CD14-positive monocyte (primary cell): ENCODE measurements at regions of chr6 and their contacts with region 1.

Region 1: DNA sequence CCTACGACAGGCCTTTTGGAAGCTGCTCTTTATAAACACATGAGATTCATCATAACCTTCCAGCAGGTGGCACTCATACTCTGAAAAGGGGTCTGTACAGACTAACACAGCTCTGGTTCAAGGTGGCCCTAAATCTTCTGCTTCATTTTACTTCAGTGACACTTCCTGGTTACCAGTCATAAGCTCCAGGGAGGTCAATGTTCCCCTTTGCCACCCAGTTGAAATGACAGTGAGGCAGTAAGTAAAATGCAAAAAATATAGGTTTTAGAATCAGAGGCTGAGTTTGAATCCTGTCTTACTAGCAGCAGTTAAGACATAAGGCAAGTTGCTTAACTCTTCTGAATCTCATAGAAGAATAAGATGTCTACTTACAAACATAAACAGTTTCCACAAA is 132.8 kb downstream of the CDK19 start:
- DNase-seq: peak; percentile 77 to 86 (median 86)
- H3K4me3 ChIP-seq: no peak overlapping the region
- H3K4me3 Mint-ChIP-seq: no peak overlapping the region
- H3K27ac ChIP-seq: peak overlapping the region in 1 of 2 donors; percentile 44
- H3K27ac Mint-ChIP-seq: peak overlapping the region in 4 of 7 donors; percentile 19 to 65 (median 36)
- H3K4me1 ChIP-seq: peaks cover 5 to 13% of the 10 kb centered on the region in 2 donors
- H3K4me1 Mint-ChIP-seq: peaks cover 18% of the 10 kb centered on the region
- H3K27me3 ChIP-seq: no peaks in the 10 kb centered on the region
- H3K27me3 Mint-ChIP-seq: no peaks in the 10 kb centered on the region
- CTCF ChIP-seq: peak; percentile 76

Region 2: DNA sequence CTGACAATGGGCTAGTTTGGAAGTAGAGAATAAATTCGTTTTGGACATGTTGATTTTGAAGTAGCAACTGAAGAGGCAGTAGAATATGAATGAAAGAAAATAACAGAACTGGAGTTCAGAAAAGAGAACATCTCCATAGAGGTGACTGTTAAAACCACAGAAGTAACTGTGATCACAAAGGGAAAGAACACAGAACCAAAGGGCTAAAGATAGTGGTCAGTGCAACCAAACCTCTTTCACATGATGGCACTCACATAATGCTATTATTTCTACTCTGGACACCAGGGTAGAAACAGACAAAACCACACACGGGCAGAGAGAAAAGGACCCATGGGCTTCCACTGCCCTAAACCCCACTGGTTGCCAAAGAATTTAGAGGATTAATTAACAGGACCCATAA is 74.4 kb after region 1 on chr6:
- intact Hi-C with region 1: no loop called
- DNase-seq: no peak
- H3K4me3 ChIP-seq: no peak overlapping the region
- H3K4me3 Mint-ChIP-seq: no peak overlapping the region
- H3K27ac ChIP-seq: peak overlapping the region in 1 of 2 donors; percentile 15
- H3K27ac Mint-ChIP-seq: peak overlapping the region in 3 of 7 donors; percentile 25 to 45 (median 41)
- H3K4me1 ChIP-seq: peaks cover 12 to 20% of the 10 kb centered on the region in 2 donors
- H3K4me1 Mint-ChIP-seq: peaks cover 38% of the 10 kb centered on the region
- H3K27me3 ChIP-seq: no peaks in the 10 kb centered on the region
- H3K27me3 Mint-ChIP-seq: peaks cover 0 to 2% (median 0%) of the 10 kb centered on the region in 3 donors
- CTCF ChIP-seq: no peak

Region 3: GRCh38 chr6:110873981-110874879 is 191.8 kb after region 1 on chr6 and contains the start of gene AMD1:
- intact Hi-C with region 1: loop called in 1 of 2 experiments (anchors 10 kb)
- DNase-seq: peak; percentile 97 to 99 (median 98)
- H3K4me3 ChIP-seq: peak within 1 kb of the TSS; percentile 92 to 98 (median 94)
- H3K4me3 Mint-ChIP-seq: peak within 1 kb of the TSS; percentile 96 to 100
- H3K27ac ChIP-seq: peak within 1 kb of the TSS; percentile 93 to 96
- H3K27ac Mint-ChIP-seq: peak within 1 kb of the TSS; percentile 96 to 99 (median 98)
- H3K4me1 ChIP-seq: peaks cover 28 to 35% of the 10 kb centered on the region in 2 donors
- H3K4me1 Mint-ChIP-seq: peaks cover 24% of the 10 kb centered on the region
- H3K27me3 ChIP-seq: no peaks in the 10 kb centered on the region
- H3K27me3 Mint-ChIP-seq: no peaks in the 10 kb centered on the region
- CTCF ChIP-seq: no peak
- polyA plus RNA-seq, gene AMD1: 35.0 to 60.5 (median 45.3) TPM

Region 4: GRCh38 chr6:110882271-110882613 is 199.8 kb after region 1 on chr6:
- intact Hi-C with region 1: loop called (anchors 10 kb)
- DNase-seq: no peak
- H3K4me3 ChIP-seq: no peak overlapping the region
- H3K4me3 Mint-ChIP-seq: peak overlapping the region in 1 of 2 donors; percentile 34
- H3K27ac ChIP-seq: peak overlapping the region in 1 of 2 donors; percentile 93
- H3K27ac Mint-ChIP-seq: peak overlapping the region in 4 of 7 donors; percentile 12 to 81 (median 50)
- H3K4me1 ChIP-seq: peaks cover 70 to 90% of the 10 kb centered on the region in 2 donors
- H3K4me1 Mint-ChIP-seq: peaks cover 88% of the 10 kb centered on the region
- H3K27me3 ChIP-seq: no peaks in the 10 kb centered on the region
- H3K27me3 Mint-ChIP-seq: no peaks in the 10 kb centered on the region
- CTCF ChIP-seq: no peak

Region 5: DNA sequence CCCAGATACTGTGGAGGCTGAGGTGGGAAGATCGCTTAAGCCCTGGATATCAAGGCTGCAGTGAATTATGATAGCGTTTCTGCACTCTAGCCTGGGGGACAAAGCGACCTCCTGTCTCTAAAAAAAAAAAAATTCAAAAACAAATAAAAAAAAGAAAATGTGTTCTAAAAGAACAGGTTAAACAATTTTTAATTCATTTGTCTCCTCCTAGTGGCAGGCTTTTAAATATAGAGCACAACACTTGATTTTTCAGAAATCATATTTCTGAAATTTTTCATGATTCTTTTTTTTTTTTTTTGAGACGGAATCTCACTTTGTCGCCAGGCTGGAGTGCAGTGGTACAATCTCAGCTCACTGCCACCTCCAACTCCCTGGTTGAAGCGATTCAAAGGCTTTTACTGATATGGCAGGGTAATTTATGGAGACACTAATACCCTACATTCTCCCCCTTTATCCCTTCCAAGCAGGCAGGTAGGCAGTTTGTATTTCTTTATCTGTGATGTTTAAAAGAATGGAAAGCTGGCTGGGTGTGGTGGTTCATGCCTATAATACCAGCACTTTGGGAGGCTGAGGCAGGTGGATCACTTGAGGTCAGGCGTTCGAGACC is 267.3 kb after region 1 on chr6:
- intact Hi-C with region 1: loop called in 1 of 2 experiments (anchors 5 kb)
- DNase-seq: peak in 2 of 3 donors; percentile 20 to 54
- H3K4me3 ChIP-seq: no peak overlapping the region
- H3K4me3 Mint-ChIP-seq: no peak overlapping the region
- H3K27ac ChIP-seq: no peak overlapping the region
- H3K27ac Mint-ChIP-seq: peak overlapping the region in 4 of 7 donors; percentile 10 to 46 (median 32)
- H3K4me1 ChIP-seq: peaks cover 8 to 11% of the 10 kb centered on the region in 2 donors
- H3K4me1 Mint-ChIP-seq: peaks cover 7% of the 10 kb centered on the region
- H3K27me3 ChIP-seq: no peaks in the 10 kb centered on the region
- H3K27me3 Mint-ChIP-seq: peaks cover 0 to 2% (median 1%) of the 10 kb centered on the region in 3 donors
- CTCF ChIP-seq: peak; percentile 79

Region 6: GRCh38 chr6:110958329-110959192 is 276.1 kb after region 1 on chr6 and contains the start of gene GTF3C6:
- intact Hi-C with region 1: loop called (anchors 5 kb)
- DNase-seq: peak; percentile 92 to 94 (median 94)
- H3K4me3 ChIP-seq: peak within 1 kb of the TSS; percentile 87 to 99 (median 91)
- H3K4me3 Mint-ChIP-seq: peak within 1 kb of the TSS; percentile 92 to 97
- H3K27ac ChIP-seq: peak within 1 kb of the TSS; percentile 97
- H3K27ac Mint-ChIP-seq: peak within 1 kb of the TSS; percentile 92 to 97 (median 95)
- H3K4me1 ChIP-seq: peaks cover 10% of the 10 kb centered on the region in 2 donors
- H3K4me1 Mint-ChIP-seq: peaks cover 16% of the 10 kb centered on the region
- H3K27me3 ChIP-seq: no peaks in the 10 kb centered on the region
- H3K27me3 Mint-ChIP-seq: peaks cover 0 to 2% (median 0%) of the 10 kb centered on the region in 3 donors
- CTCF ChIP-seq: no peak
- polyA plus RNA-seq, gene GTF3C6: 15.1 to 93.9 (median 91.1) TPM

Region 7: GRCh38 chr6:110981202-110981600 is 298.7 kb after region 1 on chr6:
- intact Hi-C with region 1: loop called in 1 of 2 experiments (anchors 10 kb)
- DNase-seq: no peak
- H3K4me3 ChIP-seq: peak overlapping the region; percentile 87 to 97 (median 89)
- H3K4me3 Mint-ChIP-seq: peak overlapping the region; percentile 96
- H3K27ac ChIP-seq: peak overlapping the region; percentile 86 to 95
- H3K27ac Mint-ChIP-seq: peak overlapping the region; percentile 98 to 100 (median 99)
- H3K4me1 ChIP-seq: peaks cover 20 to 23% of the 10 kb centered on the region in 2 donors
- H3K4me1 Mint-ChIP-seq: peaks cover 21% of the 10 kb centered on the region
- H3K27me3 ChIP-seq: no peaks in the 10 kb centered on the region
- H3K27me3 Mint-ChIP-seq: peaks cover 0 to 2% (median 0%) of the 10 kb centered on the region in 3 donors
- CTCF ChIP-seq: no peak